BJ (cell line): ENCODE measurements at regions of chr2 and their contacts with region 1.

Region 1: GRCh38 chr2:64586883-64587481 is 62.9 kb downstream of the AFTPH start:
- DNase-seq: no peak
- H3K4me3 ChIP-seq: no peak overlapping the region
- H3K27me3 ChIP-seq: no peaks in the 10 kb centered on the region
- CTCF ChIP-seq: peak; percentile 64

Region 2: DNA sequence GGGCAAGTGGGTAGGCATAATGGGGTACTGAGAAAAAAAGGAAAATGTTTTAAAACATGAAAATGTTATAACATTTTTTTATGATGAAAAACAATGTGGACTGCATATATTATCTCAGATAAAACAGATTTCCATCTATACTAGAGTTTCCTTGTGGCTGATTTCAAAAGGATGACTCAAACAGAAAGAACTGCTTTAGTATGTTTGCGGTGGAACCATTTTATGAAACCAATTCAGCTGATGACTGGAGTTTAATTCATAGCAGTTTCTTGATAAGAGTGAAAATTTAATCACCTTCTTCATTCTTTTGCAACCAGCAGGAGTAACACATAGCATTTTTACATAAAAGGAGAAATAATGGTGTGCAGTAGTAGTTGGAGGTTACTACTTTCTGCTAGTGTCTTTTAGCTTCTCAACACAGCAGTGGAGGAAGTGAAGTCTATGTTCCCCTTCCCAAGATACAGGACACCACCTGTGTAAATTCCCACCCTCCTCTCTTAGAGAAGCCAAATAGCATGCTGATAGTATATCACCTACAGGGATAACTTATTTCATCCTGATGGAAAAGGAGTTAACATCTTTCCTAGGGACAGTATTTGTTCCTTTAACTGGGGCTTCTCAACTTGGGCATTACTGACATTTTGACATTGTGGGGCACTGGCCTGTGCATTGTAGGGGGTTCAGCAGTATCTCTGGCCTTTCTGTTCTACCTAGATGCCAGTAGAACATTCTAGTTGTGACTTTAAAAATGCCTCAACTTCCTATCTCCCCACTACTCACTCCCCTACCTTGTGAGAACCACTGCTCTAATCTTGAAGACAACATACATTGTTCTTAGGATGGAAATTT is 472.7 kb before region 1 on chr2:
- CTCF ChIA-PET with region 1: no interaction called
- POLR2A ChIA-PET with region 1: no interaction called
- DNase-seq: peak; percentile 40
- H3K4me3 ChIP-seq: no peak overlapping the region
- H3K27me3 ChIP-seq: no peaks in the 10 kb centered on the region
- CTCF ChIP-seq: no peak

Region 3: GRCh38 chr2:64737547-64737946 is 150.6 kb after region 1 on chr2:
- CTCF ChIA-PET with region 1: no interaction called
- POLR2A ChIA-PET with region 1: no interaction called
- DNase-seq: no peak
- H3K4me3 ChIP-seq: no peak overlapping the region
- H3K27me3 ChIP-seq: no peaks in the 10 kb centered on the region
- CTCF ChIP-seq: no peak

Region 4: GRCh38 chr2:64873472-64873924 is 286.5 kb after region 1 on chr2:
- CTCF ChIA-PET with region 1: interaction called, 19 read pairs
- POLR2A ChIA-PET with region 1: no interaction called
- DNase-seq: no peak
- H3K4me3 ChIP-seq: no peak overlapping the region
- H3K27me3 ChIP-seq: peaks cover 28% of the 10 kb centered on the region
- CTCF ChIP-seq: peak; percentile 99